AG04449 (cell line): ENCODE measurements at regions of chr9 and their contacts with region 1.

Region 1: GRCh38 chr9:136445799-136446198 is 6.2 kb upstream of the INPP5E start:
- DNase-seq: no peak
- H3K4me3 ChIP-seq: no peak overlapping the region
- CTCF ChIP-seq: no peak

Region 2: GRCh38 chr9:136457326-136457725 is 11.5 kb after region 1 on chr9:
- CTCF ChIA-PET with region 1: interaction called, 16 read pairs
- POLR2A ChIA-PET with region 1: no interaction called
- DNase-seq: no peak
- H3K4me3 ChIP-seq: no peak overlapping the region
- CTCF ChIP-seq: no peak